CD8-positive, alpha-beta memory T cell (primary cell): ENCODE measurements at regions of chr12 and their contacts with region 1.

Region 1: GRCh38 chr12:56280849-56281248 is 14.1 kb downstream of the COQ10A start:
- DNase-seq: no peak
- H3K4me3 ChIP-seq: no peak overlapping the region
- H3K4me3 Mint-ChIP-seq: no peak overlapping the region
- H3K27ac ChIP-seq: no peak overlapping the region
- H3K27ac Mint-ChIP-seq: peak overlapping the region in 6 of 8 donors; percentile 40 to 85 (median 54)
- H3K4me1 ChIP-seq: no peaks in the 10 kb centered on the region
- H3K4me1 Mint-ChIP-seq: peaks cover 0 to 3% (median 3%) of the 10 kb centered on the region in 3 donors
- H3K27me3 ChIP-seq: no peaks in the 10 kb centered on the region
- H3K27me3 Mint-ChIP-seq: no peaks in the 10 kb centered on the region

Region 2: GRCh38 chr12:56425193-56425592 is 144.3 kb after region 1 on chr12:
- CTCF ChIA-PET with region 1: no interaction called
- POLR2A ChIA-PET with region 1: interaction called, 10 read pairs
- DNase-seq: no peak
- H3K4me3 ChIP-seq: no peak overlapping the region
- H3K4me3 Mint-ChIP-seq: no peak overlapping the region
- H3K27ac ChIP-seq: no peak overlapping the region
- H3K27ac Mint-ChIP-seq: peak overlapping the region in 2 of 8 donors; percentile 1 to 76
- H3K4me1 ChIP-seq: peaks cover 10% of the 10 kb centered on the region
- H3K4me1 Mint-ChIP-seq: peaks cover 4 to 6% (median 6%) of the 10 kb centered on the region in 3 donors
- H3K27me3 ChIP-seq: no peaks in the 10 kb centered on the region
- H3K27me3 Mint-ChIP-seq: no peaks in the 10 kb centered on the region